Endothelial cell of umbilical vein (primary cell): ENCODE measurements at regions of chr10 and their contacts with region 1.

Region 1: GRCh38 chr10:72173635-72174296 is 42.0 kb upstream of the ANAPC16 start:
- DNase-seq: no peak
- H3K4me3 ChIP-seq: no peak overlapping the region
- H3K27ac ChIP-seq: no peak overlapping the region
- H3K4me1 ChIP-seq: peaks cover 42% of the 10 kb centered on the region
- H3K27me3 ChIP-seq: no peaks in the 10 kb centered on the region
- CTCF ChIP-seq: no peak
- POLR2A ChIP-seq: no peak

Region 2: DNA sequence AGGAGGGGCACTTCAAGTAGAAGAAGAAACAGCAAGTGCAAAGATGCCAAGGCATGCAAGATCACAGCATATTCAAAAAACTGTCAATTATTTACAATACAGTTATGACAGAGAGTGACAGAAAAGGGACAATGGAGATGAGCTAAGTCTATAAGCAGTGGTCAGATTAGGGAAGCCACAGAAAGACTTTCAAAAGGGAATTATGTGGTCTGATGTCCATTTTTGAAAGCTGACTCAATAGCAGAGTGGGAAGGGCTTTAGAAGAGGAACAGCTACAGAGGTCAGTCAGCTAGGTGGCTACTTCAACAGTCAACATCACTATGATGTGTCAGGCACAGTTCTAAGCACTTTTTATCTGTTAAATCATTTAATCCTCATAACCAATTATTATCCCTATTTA is 40.2 kb before region 1 on chr10:
- CTCF ChIA-PET with region 1: no interaction called
- POLR2A ChIA-PET with region 1: no interaction called
- dilution Hi-C with region 1: no loop called
- intact Hi-C with region 1: loop called (anchors 5 kb)
- DNase-seq: no peak
- H3K4me3 ChIP-seq: no peak overlapping the region
- H3K27ac ChIP-seq: no peak overlapping the region
- H3K4me1 ChIP-seq: no peaks in the 10 kb centered on the region
- H3K27me3 ChIP-seq: no peaks in the 10 kb centered on the region
- CTCF ChIP-seq: no peak
- POLR2A ChIP-seq: no peak

Region 3: DNA sequence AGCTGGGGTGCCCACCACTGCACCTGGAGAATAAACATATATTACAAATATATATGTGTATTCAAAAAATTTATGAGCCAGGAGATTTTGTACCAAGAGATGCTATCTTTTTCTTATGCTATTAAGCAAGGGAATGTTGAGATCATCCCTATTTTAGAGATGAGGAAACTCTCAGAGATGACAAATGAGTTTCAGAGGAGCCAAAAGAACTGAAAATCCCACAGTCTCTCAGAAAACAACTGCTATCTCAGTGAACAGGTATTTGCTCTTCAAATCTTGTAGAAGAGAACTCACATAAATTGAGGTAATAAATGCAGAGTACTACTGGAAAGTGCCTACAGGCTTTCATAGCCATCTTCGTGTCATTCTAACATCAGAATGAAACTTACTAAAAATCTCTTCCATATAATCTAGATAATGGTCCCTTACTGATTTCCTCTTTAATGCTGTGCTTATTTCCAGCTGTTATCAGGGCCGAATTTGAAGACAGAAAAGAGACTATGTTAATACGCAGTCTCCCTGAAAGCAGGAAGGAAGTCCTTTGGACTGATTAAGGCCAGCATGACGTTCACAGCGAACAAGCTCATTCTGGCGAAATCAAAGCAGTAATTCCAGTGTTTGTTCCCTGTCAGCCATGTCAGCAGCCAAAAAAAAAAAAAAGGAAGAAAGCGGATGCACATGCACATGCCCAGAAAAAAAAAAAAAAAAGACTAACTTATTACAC is 12.7 kb after region 1 on chr10:
- CTCF ChIA-PET with region 1: interaction called, 8 read pairs
- POLR2A ChIA-PET with region 1: interaction called, 6 read pairs
- dilution Hi-C with region 1: no loop called
- intact Hi-C with region 1: loop called (anchors 2 kb)
- DNase-seq: peak; percentile 80
- H3K4me3 ChIP-seq: peak overlapping the region in 2 of 3 experiments; percentile 7 to 39
- H3K27ac ChIP-seq: peak overlapping the region; percentile 57
- H3K4me1 ChIP-seq: peaks cover 11% of the 10 kb centered on the region
- H3K27me3 ChIP-seq: no peaks in the 10 kb centered on the region
- CTCF ChIP-seq: no peak
- POLR2A ChIP-seq: no peak

Region 4: DNA sequence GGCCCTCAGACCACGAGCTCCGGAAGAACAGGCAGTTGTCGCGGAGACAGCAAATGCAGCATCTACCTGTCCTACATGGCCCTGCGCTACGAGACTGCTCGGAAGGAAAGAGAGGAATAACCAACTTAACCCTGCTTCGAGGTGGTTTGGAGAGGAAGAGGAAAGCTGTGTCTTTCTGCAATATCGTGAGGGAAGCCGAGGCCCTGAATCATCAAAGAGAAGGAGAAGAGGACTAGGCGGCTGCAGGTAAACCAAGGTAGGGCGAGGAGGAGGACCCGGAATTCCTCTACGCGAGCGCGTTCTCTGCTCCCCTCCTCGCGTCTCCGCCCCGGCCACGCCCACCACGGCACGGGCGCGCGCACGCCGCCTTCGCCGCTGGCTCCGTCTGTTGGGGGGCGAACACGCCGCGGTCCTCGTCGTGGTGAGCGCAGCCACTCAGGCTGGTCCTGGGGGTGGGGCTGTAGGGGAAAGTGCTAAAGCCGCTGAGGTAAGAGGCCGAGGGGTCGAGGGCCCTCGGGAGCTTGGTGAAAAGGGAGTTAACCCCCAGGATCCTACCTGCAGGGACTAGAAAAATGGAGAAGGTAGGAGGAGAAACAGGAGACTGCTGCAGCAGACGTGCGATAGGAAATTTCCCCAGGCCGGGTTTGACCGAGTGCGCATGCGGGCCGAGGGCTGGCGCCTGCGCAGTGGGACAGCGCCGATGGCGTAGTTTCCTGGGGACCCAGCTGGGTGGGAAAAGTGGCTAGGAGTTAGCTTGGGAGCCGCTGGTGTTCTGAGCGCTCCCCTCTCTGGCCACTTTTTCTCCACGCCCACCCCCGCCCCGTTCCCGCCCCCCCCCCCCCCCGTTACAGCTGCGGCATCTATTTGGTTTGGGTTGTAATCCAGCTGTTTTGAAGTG is 42.1 kb after region 1 on chr10 and contains the starts of genes ANAPC16 and ASCC1:
- CTCF ChIA-PET with region 1: interaction called, 7 read pairs
- POLR2A ChIA-PET with region 1: no interaction called
- dilution Hi-C with region 1: no loop called
- intact Hi-C with region 1: loop called (anchors 2 kb)
- DNase-seq: peak; percentile 95
- H3K4me3 ChIP-seq: peak within 1 kb of the TSS; percentile 72 to 94 (median 84)
- H3K27ac ChIP-seq: peak within 1 kb of the TSS; percentile 85
- H3K4me1 ChIP-seq: peaks cover 4% of the 10 kb centered on the region
- H3K27me3 ChIP-seq: no peaks in the 10 kb centered on the region
- CTCF ChIP-seq: no peak
- POLR2A ChIP-seq: peak; percentile 94
- total RNA-seq, gene ANAPC16: 44.2 and 44.4 TPM in 2 replicates
- total RNA-seq, gene ASCC1: 24.9 and 28.2 TPM in 2 replicates

Region 5: DNA sequence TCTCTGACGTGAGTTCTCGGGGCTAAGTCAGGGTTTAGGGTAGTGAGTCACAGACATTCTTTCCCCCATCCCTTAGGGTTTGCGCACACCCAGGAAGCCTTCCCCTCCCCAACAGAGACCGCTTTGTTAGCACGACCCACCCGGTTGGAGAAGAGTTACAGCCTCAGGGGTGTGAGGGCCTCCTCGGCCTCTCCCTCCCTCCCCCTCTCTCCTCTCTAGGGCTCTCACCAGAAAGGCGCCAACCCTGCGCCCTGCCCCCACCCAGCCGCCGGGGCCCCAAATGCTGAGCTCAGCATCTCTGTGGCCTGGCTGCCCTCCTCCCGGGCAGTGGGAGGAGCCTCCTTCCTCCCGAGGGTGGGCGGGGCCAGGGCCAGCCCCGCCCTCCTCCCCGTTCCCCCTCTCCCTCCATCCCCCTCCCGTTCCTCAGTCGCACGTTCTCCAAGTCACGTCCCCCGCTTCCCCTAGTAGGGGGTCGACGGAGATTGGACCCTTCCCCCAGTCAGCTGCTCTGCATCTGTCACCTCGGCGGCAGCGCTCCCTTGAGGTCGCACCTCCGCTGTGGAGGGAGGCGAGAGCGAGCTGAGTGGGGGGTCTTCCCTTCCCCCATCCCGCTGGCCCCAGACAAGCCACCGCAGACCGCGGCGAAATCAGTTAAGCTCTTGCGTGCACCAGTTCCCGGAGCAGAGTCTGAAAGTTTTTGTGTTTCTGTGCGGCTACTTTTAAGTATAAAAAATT is 87.0 kb after region 1 on chr10:
- CTCF ChIA-PET with region 1: no interaction called
- POLR2A ChIA-PET with region 1: no interaction called
- dilution Hi-C with region 1: no loop called
- intact Hi-C with region 1: no loop called
- DNase-seq: peak; percentile 55
- H3K4me3 ChIP-seq: peak overlapping the region; percentile 61 to 78 (median 71)
- H3K27ac ChIP-seq: peak overlapping the region; percentile 26
- H3K4me1 ChIP-seq: peaks cover 17% of the 10 kb centered on the region
- H3K27me3 ChIP-seq: no peaks in the 10 kb centered on the region
- CTCF ChIP-seq: no peak
- POLR2A ChIP-seq: no peak